ENCODE measurements at regions of chr17 and their contacts with region 1.

Region 1: GRCh38 chr17:49952209-49952911 is 16.6 kb upstream of the DLX4 start:
- DNase-seq: peak; percentile 76
- ATAC-seq: peak; percentile 97
- H3K4me3 ChIP-seq: no peak overlapping the region
- H3K27ac ChIP-seq: no peak overlapping the region
- H3K4me1 ChIP-seq: peaks cover 20 to 29% of the 10 kb centered on the region in 2 experiments
- H3K27me3 ChIP-seq: no peaks in the 10 kb centered on the region; the same call in 1 of the 2 replicates
- CTCF ChIP-seq: peak; percentile 92 to 100 (median 100)
- POLR2A ChIP-seq: no peak
- RAD21 ChIP-seq: peak; percentile 96

Region 2: DNA sequence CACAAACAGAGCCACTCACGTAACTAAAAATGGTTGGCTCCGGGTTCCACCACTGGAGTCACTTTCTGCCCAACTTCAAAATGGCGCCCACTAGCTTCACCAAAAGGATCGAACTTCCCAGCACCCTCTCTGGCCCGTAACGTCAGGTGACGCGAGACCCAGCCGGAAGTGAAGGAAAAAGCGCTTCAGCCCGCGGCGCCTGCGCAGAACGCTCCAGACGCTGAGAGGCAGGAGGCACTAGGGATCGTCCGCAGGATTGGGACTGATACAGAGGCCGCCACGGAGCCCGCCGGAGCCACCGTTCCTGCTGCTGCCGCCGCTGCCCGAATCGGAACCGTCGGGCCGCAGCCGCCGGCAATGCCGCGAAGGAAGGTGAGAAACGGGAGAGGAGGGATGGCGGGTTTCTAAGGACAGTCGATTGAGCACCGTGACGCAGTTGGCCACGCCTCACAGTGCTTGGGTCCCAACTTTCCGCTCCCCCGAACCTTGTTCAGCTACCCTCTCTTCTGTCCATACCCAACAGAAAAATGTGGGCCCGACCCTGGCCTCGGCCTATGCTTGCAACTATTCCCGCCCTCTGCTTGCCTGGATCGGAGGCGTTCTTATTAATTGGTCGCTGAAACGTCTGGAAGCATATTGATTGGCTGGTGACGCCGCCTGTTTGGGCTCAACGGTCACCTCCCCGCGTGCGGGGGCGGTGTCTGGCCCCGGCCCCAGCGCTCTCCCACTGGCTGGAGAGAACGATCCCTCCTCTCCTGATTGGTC is 163.7 kb before region 1 on chr17 and contains the start of gene KAT7:
- CTCF ChIA-PET with region 1: no interaction called
- POLR2A ChIA-PET with region 1: no interaction called
- RAD21 ChIA-PET with region 1: no interaction called
- intact Hi-C with region 1: no loop called
- DNase-seq: peak; percentile 100
- ATAC-seq: peak; percentile 93
- H3K4me3 ChIP-seq: peak within 1 kb of the TSS; percentile 86 to 96
- H3K27ac ChIP-seq: peak within 1 kb of the TSS; percentile 98
- H3K4me1 ChIP-seq: peaks cover 13 to 19% of the 10 kb centered on the region in 2 experiments
- H3K27me3 ChIP-seq: no peaks in the 10 kb centered on the region; the same call in 1 of the 2 replicates
- CTCF ChIP-seq: no peak
- POLR2A ChIP-seq: peak; percentile 82
- RAD21 ChIP-seq: no peak
- total RNA-seq, gene KAT7: 79.5 TPM

Region 3: DNA sequence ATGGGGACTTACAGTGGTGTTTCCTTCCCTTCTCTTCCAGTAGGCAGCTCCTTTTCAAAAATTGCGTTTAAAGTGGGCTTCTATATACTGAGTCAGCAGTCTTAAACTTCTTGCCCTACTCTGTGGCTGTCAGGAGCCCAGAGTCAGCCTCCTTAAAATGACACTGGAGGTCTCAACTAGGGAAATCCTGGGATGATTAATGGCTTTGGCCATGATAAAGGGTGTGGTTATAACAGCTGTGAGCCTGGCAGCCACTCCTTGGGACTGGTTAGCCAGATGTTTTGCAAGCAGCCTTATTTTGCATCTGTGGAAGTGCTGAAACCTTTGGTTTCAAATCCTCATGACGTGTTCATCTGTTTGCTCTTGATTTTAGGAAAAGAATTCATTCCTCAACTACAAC is 129.5 kb before region 1 on chr17:
- CTCF ChIA-PET with region 1: no interaction called
- POLR2A ChIA-PET with region 1: no interaction called
- RAD21 ChIA-PET with region 1: no interaction called
- intact Hi-C with region 1: no loop called
- DNase-seq: no peak
- ATAC-seq: no peak
- H3K4me3 ChIP-seq: no peak overlapping the region
- H3K27ac ChIP-seq: no peak overlapping the region
- H3K4me1 ChIP-seq: no peaks in the 10 kb centered on the region
- H3K27me3 ChIP-seq: no peaks in the 10 kb centered on the region
- CTCF ChIP-seq: no peak
- POLR2A ChIP-seq: no peak
- RAD21 ChIP-seq: no peak

Region 4: DNA sequence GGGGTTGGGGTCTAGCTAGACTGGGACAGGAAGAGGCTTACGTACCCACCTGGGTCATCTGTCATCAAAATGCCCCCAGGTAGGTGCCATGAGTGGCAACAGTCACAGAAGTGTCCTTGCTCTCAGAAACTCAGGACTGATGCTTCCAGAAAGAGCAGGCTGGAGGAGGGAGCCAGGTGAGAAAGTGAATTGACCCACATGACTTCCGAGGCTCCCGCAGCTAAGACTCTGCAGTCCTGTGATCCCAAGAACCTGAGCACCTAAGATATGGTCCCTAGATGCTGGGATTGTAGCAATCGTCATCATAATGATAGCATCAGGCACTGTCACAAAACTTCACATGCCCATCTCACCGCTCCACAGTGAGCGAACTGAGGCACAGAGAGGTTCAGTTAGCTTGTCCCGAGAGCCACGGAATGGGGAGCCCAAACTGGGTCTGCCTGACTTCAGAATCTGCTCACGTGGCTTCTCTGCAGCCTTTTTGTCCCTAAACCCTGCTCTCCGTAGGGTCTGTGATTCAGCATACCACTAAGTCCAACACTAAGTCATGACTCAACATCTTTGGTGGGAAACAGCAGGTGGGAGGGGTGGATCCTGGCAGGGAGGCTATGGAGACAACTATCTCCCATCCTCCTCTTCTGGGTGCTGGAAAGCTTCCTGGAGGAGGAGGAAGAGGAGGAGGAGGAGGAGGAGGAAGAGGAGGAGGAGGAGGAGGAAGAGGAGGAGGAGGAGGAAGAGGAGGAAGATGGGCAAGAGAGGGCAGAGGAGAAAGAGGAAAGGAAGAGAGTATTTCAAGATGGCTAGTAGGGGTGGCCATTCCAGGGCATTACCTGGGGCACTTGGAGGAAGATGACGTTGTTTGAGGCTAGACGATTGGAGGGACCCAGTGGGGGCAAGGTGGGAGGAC is 38.9 kb before region 1 on chr17:
- CTCF ChIA-PET with region 1: interaction called, 16 read pairs
- POLR2A ChIA-PET with region 1: no interaction called
- RAD21 ChIA-PET with region 1: no interaction called
- intact Hi-C with region 1: no loop called
- DNase-seq: peak; percentile 23
- ATAC-seq: peak; percentile 70
- H3K4me3 ChIP-seq: no peak overlapping the region
- H3K27ac ChIP-seq: no peak overlapping the region
- H3K4me1 ChIP-seq: peaks cover 6 to 37% of the 10 kb centered on the region in 2 experiments
- H3K27me3 ChIP-seq: no peaks in the 10 kb centered on the region
- CTCF ChIP-seq: no peak
- POLR2A ChIP-seq: no peak
- RAD21 ChIP-seq: no peak

Region 5: DNA sequence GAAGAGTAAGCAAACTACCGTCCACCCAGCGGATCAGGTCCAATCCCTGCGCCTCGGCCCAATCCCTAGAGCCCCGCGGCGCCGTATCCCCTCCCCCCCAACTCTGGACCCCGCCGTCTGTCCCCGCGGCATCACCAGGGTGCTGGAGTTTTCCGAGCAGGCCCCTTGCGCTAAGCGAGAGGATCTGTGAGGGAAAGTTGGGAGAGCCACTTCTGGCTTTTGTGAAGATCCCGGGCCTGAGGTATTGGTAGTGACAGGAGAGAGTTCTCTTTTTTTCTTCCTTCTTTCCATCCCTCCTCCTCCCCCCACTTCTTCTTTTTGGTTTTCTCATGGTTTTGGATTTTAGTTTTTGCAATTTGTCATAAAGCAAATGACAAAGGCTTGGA is 13.2 kb after region 1 on chr17:
- CTCF ChIA-PET with region 1: interaction called, 20 read pairs
- POLR2A ChIA-PET with region 1: no interaction called
- RAD21 ChIA-PET with region 1: no interaction called
- intact Hi-C with region 1: no loop called
- DNase-seq: no peak
- ATAC-seq: no peak
- H3K4me3 ChIP-seq: no peak overlapping the region
- H3K27ac ChIP-seq: no peak overlapping the region
- H3K4me1 ChIP-seq: peaks cover 9 to 28% of the 10 kb centered on the region in 2 experiments; a peak in 3 of 4 replicates
- H3K27me3 ChIP-seq: peaks cover 21% of the 10 kb centered on the region; the same call in 1 of the 2 replicates
- CTCF ChIP-seq: no peak
- POLR2A ChIP-seq: no peak
- RAD21 ChIP-seq: no peak

Region 6: DNA sequence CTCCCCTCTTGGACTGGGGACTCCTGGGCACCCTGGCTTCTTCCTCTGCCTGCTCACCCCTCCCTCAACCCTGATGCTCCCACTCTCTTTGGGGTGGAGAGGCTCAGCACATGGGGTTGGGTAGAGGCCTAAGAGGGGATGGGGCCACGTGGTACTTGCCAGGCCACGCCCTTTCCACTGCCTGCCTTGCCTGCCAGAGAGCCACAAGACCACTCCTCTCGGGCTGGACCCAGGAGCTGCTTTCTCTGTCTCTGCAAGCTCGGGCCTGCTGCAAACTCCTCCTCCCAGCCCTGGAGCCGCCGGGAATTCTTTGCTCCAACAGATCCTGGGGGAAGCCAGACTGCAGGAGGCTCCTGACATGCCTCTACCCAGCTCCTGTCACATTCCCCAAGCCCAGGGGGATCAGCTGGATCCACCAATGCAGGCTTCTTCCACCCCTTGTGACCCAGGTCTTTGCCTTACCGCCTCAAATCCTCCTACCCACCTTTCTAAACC is 28.4 kb after region 1 on chr17:
- CTCF ChIA-PET with region 1: interaction called, 18 read pairs
- POLR2A ChIA-PET with region 1: no interaction called
- RAD21 ChIA-PET with region 1: no interaction called
- intact Hi-C with region 1: no loop called
- DNase-seq: no peak
- ATAC-seq: no peak
- H3K4me3 ChIP-seq: no peak overlapping the region
- H3K27ac ChIP-seq: no peak overlapping the region
- H3K4me1 ChIP-seq: peaks cover 6 to 14% of the 10 kb centered on the region in 2 experiments; a peak in 3 of 4 replicates
- H3K27me3 ChIP-seq: no peaks in the 10 kb centered on the region
- CTCF ChIP-seq: no peak
- POLR2A ChIP-seq: no peak
- RAD21 ChIP-seq: no peak